Activated CD4-positive, alpha-beta T cell treated with anti-CD3 and anti-CD28 coated beads, Interleukin-2, amount 10 ng/mL, durations not matched to agents 24 days and 14 days (primary cell): ENCODE measurements at regions of chr11 and their contacts with region 1.

Region 1: GRCh38 chr11:86244522-86245368 is at the start of gene EED:
- DNase-seq: peak; percentile 98
- H3K4me3 Mint-ChIP-seq: no peak within 1 kb of the TSS
- H3K27ac Mint-ChIP-seq: no peak within 1 kb of the TSS
- H3K4me1 Mint-ChIP-seq: peaks cover 34% of the 10 kb centered on the region
- H3K27me3 Mint-ChIP-seq: no peaks in the 10 kb centered on the region
- total RNA-seq, gene EED: 269 TPM in 2 replicates

Region 2: GRCh38 chr11:85627998-85628770 is 616.6 kb before region 1 on chr11 and contains the start of gene TMEM126B:
- intact Hi-C with region 1: loop called (anchors 1 kb)
- DNase-seq: peak; percentile 99
- H3K4me3 Mint-ChIP-seq: peak within 1 kb of the TSS; percentile 96
- H3K27ac Mint-ChIP-seq: peak within 1 kb of the TSS; percentile 95
- H3K4me1 Mint-ChIP-seq: peaks cover 43% of the 10 kb centered on the region
- H3K27me3 Mint-ChIP-seq: peaks cover 2% of the 10 kb centered on the region
- total RNA-seq, gene TMEM126B: 52.2 and 54.4 TPM in 2 replicates

Region 3: DNA sequence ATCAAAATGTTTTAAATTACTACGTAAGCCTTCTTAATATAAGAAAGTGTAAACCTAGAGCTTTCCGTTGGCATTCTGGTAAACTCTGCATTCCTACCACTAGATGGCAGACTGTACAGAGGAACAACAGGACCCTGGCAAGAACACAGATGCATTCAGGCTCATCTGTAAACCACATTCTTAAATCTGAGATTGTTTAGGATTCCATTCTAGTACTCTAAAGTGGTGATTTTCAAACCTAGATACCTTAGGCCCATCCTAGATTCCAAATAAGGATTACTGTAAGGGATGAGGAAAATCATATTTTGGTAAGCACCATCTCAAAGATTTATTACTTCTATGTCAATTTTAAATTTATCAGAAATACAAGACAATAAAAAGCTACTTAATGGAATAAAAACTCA is 202.8 kb before region 1 on chr11:
- intact Hi-C with region 1: loop called (anchors 2 kb)
- DNase-seq: peak; percentile 88
- H3K4me3 Mint-ChIP-seq: peak overlapping the region; percentile 45
- H3K27ac Mint-ChIP-seq: peak overlapping the region; percentile 73
- H3K4me1 Mint-ChIP-seq: peaks cover 57% of the 10 kb centered on the region
- H3K27me3 Mint-ChIP-seq: no peaks in the 10 kb centered on the region

Region 4: DNA sequence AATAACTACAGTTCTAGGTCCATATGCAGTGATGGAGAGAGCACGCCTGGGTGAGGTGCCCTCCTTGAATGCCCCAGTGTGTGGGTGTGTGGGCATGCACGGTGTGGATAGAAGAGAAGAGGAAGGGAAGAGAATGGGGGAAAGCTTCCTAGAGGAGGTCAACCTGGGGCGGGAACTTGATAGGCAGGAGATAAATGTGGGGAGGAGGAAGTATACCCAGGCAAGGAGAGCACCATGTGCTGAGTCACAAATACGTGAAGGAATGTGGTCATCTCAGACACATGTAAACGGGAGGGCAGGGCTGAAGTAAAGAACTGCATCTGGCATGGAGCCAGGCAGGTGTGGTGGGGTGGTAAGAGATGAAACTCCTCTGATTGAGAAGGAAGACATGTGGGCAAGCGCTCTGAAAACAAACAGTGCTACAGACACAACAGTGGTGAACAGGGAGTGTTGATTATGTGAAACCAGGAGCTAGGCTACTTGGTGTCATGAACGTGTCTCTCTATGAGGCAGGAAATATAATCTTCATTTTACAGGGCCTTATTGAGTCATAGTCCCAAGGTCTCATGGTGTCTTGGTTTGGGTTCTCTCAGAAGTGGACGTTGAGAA is 61.7 kb before region 1 on chr11:
- intact Hi-C with region 1: loop called (anchors 2 kb)
- DNase-seq: peak; percentile 83
- H3K4me3 Mint-ChIP-seq: no peak overlapping the region
- H3K27ac Mint-ChIP-seq: no peak overlapping the region
- H3K4me1 Mint-ChIP-seq: peaks cover 17% of the 10 kb centered on the region
- H3K27me3 Mint-ChIP-seq: no peaks in the 10 kb centered on the region

Region 5: GRCh38 chr11:86230921-86231430 is 13.8 kb before region 1 on chr11:
- intact Hi-C with region 1: loop called (anchors 1 kb)
- DNase-seq: peak; percentile 53
- H3K4me3 Mint-ChIP-seq: no peak overlapping the region
- H3K27ac Mint-ChIP-seq: peak overlapping the region; percentile 73
- H3K4me1 Mint-ChIP-seq: peaks cover 46% of the 10 kb centered on the region
- H3K27me3 Mint-ChIP-seq: peaks cover 2% of the 10 kb centered on the region

Region 6: GRCh38 chr11:86302100-86302793 is 57.5 kb after region 1 on chr11 and contains the start of gene HIKESHI:
- intact Hi-C with region 1: loop called (anchors 1 kb)
- DNase-seq: peak; percentile 96
- H3K4me3 Mint-ChIP-seq: peak within 1 kb of the TSS; percentile 99
- H3K27ac Mint-ChIP-seq: peak within 1 kb of the TSS; percentile 98
- H3K4me1 Mint-ChIP-seq: peaks cover 19% of the 10 kb centered on the region
- H3K27me3 Mint-ChIP-seq: peaks cover 2% of the 10 kb centered on the region
- total RNA-seq, gene HIKESHI: 54.0 and 62.4 TPM in 2 replicates